Heart right ventricle (tissue), 16 donors: ENCODE measurements at regions of chr1 and their contacts with region 1.

Region 1: GRCh38 chr1:206544562-206545257 is 37.4 kb downstream of the RASSF5 start:
- DNase-seq: peak; percentile 68 to 76
- ATAC-seq: peak; percentile 63 to 87 (median 82)
- H3K4me3 ChIP-seq: no peak overlapping the region
- H3K27ac ChIP-seq: no peak overlapping the region
- H3K4me1 ChIP-seq: peaks cover 0 to 16% (median 10%) of the 10 kb centered on the region in 9 donors
- H3K27me3 ChIP-seq: no peaks in the 10 kb centered on the region
- CTCF ChIP-seq: peak; percentile 81 to 93 (median 87)

Region 2: GRCh38 chr1:205449750-205450443 is 1094.8 kb before region 1 on chr1:
- intact Hi-C with region 1: no loop called
- DNase-seq: no peak
- ATAC-seq: no peak
- H3K4me3 ChIP-seq: no peak overlapping the region
- H3K27ac ChIP-seq: no peak overlapping the region
- H3K4me1 ChIP-seq: peaks cover 0 to 38% (median 29%) of the 10 kb centered on the region in 9 donors
- H3K27me3 ChIP-seq: peaks cover 1 to 59% (median 46%) of the 10 kb centered on the region in 7 donors
- CTCF ChIP-seq: no peak

Region 3: DNA sequence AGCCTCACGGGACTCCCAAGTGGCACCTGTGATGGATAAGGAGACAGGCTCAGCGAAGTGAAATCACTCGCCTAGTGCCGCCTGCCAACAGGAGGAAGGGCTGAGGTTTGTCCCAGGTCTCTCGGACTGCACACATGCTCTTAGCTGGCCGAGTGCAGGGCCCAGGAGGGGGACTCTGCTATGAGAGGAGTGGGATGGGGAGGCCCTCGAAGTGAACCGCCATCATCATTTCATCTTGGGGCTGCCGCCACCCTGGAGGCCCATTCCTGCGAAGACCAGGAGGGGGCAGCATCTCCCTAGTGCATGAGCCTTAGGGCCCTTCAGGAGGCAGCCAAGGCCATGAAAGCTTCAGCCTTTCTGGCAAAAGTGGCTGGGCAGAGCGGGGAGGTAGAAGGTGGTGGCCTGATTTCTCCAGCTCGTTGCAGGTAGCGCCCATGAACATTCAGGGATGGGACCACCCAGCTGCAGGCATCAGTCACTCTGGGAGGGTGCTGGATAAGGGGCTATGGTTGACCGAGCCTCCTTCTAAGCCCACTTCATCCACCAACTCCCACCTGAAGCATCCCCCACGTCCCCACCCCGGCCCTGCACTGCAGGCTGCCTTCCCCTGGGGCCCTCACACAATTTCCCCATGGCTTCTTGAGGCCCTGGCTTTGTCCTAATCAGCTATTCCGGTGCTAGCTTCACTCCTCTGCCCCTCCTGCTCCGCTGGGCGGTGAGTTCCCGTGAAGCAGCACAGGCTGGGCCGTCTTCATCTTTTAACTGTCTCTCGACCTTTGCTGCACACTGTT is 54.5 kb before region 1 on chr1:
- intact Hi-C with region 1: loop called in 9 of 10 experiments (anchors 2 to 5 kb)
- DNase-seq: peak; percentile 74 to 76
- ATAC-seq: peak; percentile 80 to 91 (median 84)
- H3K4me3 ChIP-seq: no peak overlapping the region
- H3K27ac ChIP-seq: no peak overlapping the region
- H3K4me1 ChIP-seq: peaks cover 0 to 26% (median 20%) of the 10 kb centered on the region in 9 donors
- H3K27me3 ChIP-seq: no peaks in the 10 kb centered on the region
- CTCF ChIP-seq: peak; percentile 85 to 98 (median 94)

Region 4: DNA sequence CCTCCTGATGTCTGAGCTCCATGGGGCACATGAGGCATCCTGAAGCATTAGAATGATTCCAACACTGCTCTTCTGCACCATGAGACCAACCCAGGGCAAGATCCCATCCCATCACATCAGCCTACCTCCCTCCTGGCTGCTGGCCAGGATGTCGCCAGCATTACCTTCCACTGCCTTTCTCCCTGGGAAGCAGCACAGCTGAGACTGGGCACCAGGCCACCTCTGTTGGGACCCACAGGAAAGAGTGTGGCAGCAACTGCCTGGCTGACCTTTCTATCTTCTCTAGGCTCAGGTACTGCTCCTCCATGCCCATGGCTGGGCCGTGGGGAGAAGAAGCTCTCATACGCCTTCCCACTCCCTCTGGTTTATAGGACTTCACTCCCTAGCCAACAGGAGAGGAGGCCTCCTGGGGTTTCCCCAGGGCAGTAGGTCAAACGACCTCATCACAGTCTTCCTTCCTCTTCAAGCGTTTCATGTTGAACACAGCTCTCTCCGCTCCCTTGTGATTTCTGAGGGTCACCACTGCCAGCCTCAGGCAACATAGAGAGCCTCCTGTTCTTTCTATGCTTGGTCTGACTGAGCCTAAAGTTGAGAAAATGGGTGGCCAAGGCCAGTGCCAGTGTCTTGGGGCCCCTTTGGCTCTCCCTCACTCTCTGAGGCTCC is 48.4 kb before region 1 on chr1:
- intact Hi-C with region 1: loop called in 7 of 10 experiments (anchors 2 to 5 kb)
- DNase-seq: peak in 1 of 2 donors; percentile 39
- ATAC-seq: peak in 4 of 8 donors; percentile 8 to 27 (median 18)
- H3K4me3 ChIP-seq: no peak overlapping the region
- H3K27ac ChIP-seq: peak overlapping the region in 3 of 10 donors; percentile 6 to 51 (median 16)
- H3K4me1 ChIP-seq: peaks cover 8 to 32% (median 26%) of the 10 kb centered on the region in 9 donors
- H3K27me3 ChIP-seq: no peaks in the 10 kb centered on the region
- CTCF ChIP-seq: no peak

Region 5: GRCh38 chr1:206583707-206584648 is 39.3 kb after region 1 on chr1:
- intact Hi-C with region 1: loop called (anchors 1 to 5 kb)
- DNase-seq: peak; percentile 70 to 82
- ATAC-seq: peak; percentile 40 to 74 (median 56)
- H3K4me3 ChIP-seq: no peak overlapping the region
- H3K27ac ChIP-seq: peak overlapping the region in 1 of 10 donors; percentile 95
- H3K4me1 ChIP-seq: peaks cover 0 to 66% (median 15%) of the 10 kb centered on the region in 9 donors
- H3K27me3 ChIP-seq: no peaks in the 10 kb centered on the region
- CTCF ChIP-seq: peak; percentile 81 to 97 (median 93)